Activated naive CD4-positive, alpha-beta T cell treated with anti-CD3 and anti-CD28 coated beads, Interleukin-2, amount 10 ng/mL, durations not matched to agents 7 days and 5 days (primary cell): ENCODE measurements at regions of chr2 and their contacts with region 1.

Region 1: DNA sequence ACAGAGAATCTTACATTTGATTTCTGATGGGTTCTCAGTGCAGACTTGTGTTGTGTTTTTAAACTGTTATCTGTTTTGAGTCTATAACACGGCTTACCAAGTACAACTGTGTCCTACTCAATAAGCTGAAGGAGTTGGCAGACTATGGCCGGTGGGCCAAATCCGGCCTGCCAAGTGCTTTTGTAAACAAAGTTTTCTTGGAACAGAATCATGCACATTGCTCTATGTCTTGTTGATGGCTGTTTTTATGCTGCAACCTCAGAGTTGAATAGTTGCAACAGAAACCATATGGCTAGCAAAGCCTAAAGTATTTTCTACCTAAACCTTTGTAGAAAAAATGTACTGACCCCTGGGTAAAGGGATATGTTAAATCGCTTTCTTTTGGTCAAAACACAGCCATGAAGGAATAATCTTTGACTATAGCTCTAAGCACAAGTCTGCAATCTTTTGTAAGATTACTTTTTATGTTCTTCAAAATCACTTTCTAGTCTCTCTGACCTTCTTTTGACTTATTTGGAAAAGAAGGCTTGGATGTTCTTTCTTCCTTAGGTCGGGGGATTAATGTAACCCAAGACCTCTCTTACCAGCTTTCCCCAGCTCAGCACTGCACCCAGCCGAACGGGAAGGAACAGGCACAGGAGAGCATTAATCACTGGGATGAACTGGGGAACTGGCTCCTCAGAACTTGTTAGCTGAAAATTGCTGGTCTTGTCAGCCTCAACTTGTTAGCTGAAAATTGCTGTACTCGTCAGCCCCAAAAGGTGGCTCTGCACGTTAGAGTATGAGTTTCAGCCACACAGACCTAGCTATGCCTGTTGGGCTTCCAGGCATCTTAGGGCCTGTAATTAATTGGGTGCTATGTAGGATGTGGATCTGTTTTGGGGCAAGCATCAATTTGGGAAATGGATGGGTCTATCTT is 75.4 kb downstream of the CD8B2 start:
- DNase-seq: no peak
- H3K4me3 Mint-ChIP-seq: no peak overlapping the region
- H3K27ac Mint-ChIP-seq: no peak overlapping the region
- H3K4me1 Mint-ChIP-seq: peaks cover 13% of the 10 kb centered on the region
- H3K27me3 Mint-ChIP-seq: peaks cover 14% of the 10 kb centered on the region

Region 2: GRCh38 chr2:106542811-106543259 is 19.7 kb before region 1 on chr2:
- CTCF ChIA-PET with region 1: interaction called, 10 read pairs
- DNase-seq: peak; percentile 81
- H3K4me3 Mint-ChIP-seq: peak overlapping the region; percentile 36
- H3K27ac Mint-ChIP-seq: no peak overlapping the region
- H3K4me1 Mint-ChIP-seq: peaks cover 3% of the 10 kb centered on the region
- H3K27me3 Mint-ChIP-seq: peaks cover 43% of the 10 kb centered on the region

Region 3: GRCh38 chr2:106572541-106573450 is 10.3 kb after region 1 on chr2:
- CTCF ChIA-PET with region 1: interaction called, 11 read pairs
- DNase-seq: peak; percentile 39
- H3K4me3 Mint-ChIP-seq: no peak overlapping the region
- H3K27ac Mint-ChIP-seq: no peak overlapping the region
- H3K4me1 Mint-ChIP-seq: no peaks in the 10 kb centered on the region
- H3K27me3 Mint-ChIP-seq: peaks cover 10% of the 10 kb centered on the region

Region 4: GRCh38 chr2:106719222-106719621 is 156.7 kb after region 1 on chr2:
- CTCF ChIA-PET with region 1: no interaction called
- DNase-seq: no peak
- H3K4me3 Mint-ChIP-seq: no peak overlapping the region
- H3K27ac Mint-ChIP-seq: no peak overlapping the region
- H3K4me1 Mint-ChIP-seq: no peaks in the 10 kb centered on the region
- H3K27me3 Mint-ChIP-seq: no peaks in the 10 kb centered on the region